ENCODE measurements at regions of chr11 and their contacts with region 1.

Region 1: DNA sequence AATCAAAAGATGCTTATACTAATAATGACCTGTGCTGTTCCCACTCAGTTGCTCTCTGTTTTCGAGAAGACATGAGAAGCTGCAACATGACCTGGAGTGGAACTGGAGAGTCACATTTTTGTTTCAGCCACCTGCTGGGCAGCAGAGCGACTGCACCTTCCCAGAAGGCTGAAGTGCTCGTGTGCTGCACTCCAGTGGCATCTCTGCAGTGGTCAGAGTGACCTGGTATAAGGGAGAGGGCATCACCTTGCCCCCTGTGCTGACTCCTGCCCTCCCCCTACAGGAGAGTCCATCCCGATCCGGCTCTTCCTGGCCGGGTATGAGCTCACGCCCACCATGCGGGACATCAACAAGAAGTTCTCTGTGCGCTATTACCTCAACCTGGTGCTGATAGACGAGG is 8.5 kb downstream of the THYN1 start:
- DNase-seq: no peak
- H3K4me3 ChIP-seq: no peak overlapping the region
- H3K27ac ChIP-seq: no peak overlapping the region
- H3K4me1 ChIP-seq: no peaks in the 10 kb centered on the region
- H3K27me3 ChIP-seq: no peaks in the 10 kb centered on the region
- CTCF ChIP-seq: peak; percentile 52 to 58

Region 2: DNA sequence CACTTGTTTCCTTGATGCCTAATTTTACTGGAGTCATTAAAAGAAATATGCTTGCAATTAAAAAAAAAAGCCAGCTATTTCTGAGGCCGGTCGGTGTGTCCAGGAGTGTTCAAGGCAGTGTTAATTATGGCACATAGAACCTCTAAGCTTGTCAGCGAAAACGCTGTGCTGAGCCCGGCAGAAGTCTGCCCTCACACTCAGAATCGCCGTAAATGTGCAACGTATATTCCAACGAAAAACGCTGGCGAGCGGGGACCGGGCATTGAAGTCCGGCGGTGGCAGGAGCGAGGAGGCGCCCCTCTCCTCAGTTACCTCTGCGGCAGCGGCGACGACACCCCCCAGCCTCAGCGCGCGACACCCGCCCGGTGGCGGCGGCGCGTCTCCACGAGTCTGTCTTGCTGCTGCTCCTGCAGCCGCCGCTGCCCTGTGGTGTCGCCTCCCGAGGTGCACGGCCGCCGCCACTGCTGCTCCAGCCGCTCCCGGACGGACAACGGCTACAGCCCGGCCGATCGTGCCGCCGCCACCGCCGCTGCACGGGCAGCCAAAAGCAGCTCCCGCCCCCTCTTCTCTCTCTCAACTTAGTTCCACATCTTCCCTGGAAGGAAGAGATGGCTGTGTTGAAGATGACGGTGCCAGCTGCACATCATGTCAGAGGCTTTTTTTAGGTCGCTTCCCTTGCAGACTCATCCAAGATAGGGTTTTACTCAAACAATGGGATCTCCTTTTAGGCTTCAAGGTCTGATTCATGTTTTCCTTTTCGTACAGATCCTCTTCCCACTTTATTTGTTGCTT is 119.8 kb before region 1 on chr11:
- CTCF ChIA-PET with region 1: no interaction called
- dilution Hi-C with region 1: no loop called
- in situ Hi-C with region 1: no loop called
- intact Hi-C with region 1: no loop called
- DNase-seq: peak; percentile 14
- H3K4me3 ChIP-seq: peak overlapping the region; percentile 27 to 46 (median 44)
- H3K27ac ChIP-seq: no peak overlapping the region
- H3K4me1 ChIP-seq: peaks cover 40% of the 10 kb centered on the region
- H3K27me3 ChIP-seq: no peaks in the 10 kb centered on the region
- CTCF ChIP-seq: peak in 1 of 2 donors; percentile 6

Region 3: GRCh38 chr11:134170919-134171281 is 73.8 kb before region 1 on chr11:
- CTCF ChIA-PET with region 1: no interaction called
- dilution Hi-C with region 1: no loop called
- in situ Hi-C with region 1: no loop called
- intact Hi-C with region 1: no loop called
- DNase-seq: no peak
- H3K4me3 ChIP-seq: no peak overlapping the region
- H3K27ac ChIP-seq: no peak overlapping the region
- H3K4me1 ChIP-seq: no peaks in the 10 kb centered on the region
- H3K27me3 ChIP-seq: no peaks in the 10 kb centered on the region
- CTCF ChIP-seq: no peak

Region 4: GRCh38 chr11:134207538-134208239 is 37.0 kb before region 1 on chr11:
- CTCF ChIA-PET with region 1: no interaction called
- dilution Hi-C with region 1: no loop called
- in situ Hi-C with region 1: no loop called
- intact Hi-C with region 1: loop called (anchors 1 kb)
- DNase-seq: no peak
- H3K4me3 ChIP-seq: no peak overlapping the region
- H3K27ac ChIP-seq: no peak overlapping the region
- H3K4me1 ChIP-seq: no peaks in the 10 kb centered on the region
- H3K27me3 ChIP-seq: no peaks in the 10 kb centered on the region
- CTCF ChIP-seq: peak; percentile 31 to 55

Region 5: DNA sequence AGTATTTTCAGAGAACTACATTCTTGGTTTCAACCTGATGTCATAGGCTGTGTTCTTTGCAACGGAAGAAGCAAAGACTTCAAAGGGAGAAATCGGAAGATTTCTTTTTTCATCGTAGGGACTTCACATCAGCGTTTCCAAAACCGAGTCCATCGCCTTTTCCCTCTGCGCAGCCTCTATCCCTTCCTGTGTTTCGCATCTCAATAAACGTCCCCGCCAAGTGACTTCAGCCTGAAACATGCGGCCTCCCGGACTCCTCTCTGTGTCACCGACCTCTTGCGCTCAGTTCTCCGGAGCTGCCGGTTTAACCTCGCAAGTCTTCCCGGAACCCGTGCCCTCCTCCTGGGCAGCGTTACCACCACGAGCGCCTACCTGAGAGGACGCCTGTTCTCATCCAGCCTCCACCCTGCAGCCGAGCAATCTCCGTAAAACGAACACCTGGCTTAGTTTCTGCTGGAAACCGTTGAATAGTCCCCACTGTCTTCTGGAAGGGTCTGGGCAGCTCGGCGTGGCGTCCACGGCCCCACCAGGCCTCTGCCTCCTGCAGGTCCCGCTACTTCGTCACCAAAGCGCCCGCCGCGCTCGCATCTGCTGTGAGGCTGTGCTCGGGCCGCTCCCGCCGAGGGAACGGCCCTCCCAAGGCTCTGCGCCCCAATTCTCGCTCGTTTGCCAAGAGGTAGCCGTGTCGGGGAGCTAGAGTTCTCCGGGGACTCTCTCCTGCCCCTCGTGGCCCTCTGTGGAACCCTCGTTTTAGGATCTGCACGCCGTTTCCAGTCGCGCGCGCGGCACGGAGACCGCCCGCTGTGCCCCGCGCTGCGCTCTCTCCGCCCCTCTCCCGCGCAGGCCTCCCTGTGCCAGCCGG is 31.1 kb after region 1 on chr11 and contains the start of gene GLB1L3:
- CTCF ChIA-PET with region 1: no interaction called
- dilution Hi-C with region 1: no loop called
- in situ Hi-C with region 1: no loop called
- intact Hi-C with region 1: no loop called
- DNase-seq: peak; percentile 63
- H3K4me3 ChIP-seq: peak within 1 kb of the TSS; percentile 26 to 66 (median 61)
- H3K27ac ChIP-seq: peak within 1 kb of the TSS; percentile 12
- H3K4me1 ChIP-seq: peaks cover 10% of the 10 kb centered on the region
- H3K27me3 ChIP-seq: peaks cover 3% of the 10 kb centered on the region
- CTCF ChIP-seq: peak; percentile 36 to 50
- total RNA-seq, gene GLB1L3: 0.50 to 6.3 TPM

Measured in mammary epithelial cell (primary cell).